ENCODE measurements at regions of chr2 and their contacts with region 1.

Region 1: GRCh38 chr2:218876562-218877219 is 4.0 kb upstream of the WNT10A start:
- DNase-seq: peak; percentile 27 to 56 (median 49)
- H3K4me3 ChIP-seq: no peak overlapping the region
- H3K4me3 Mint-ChIP-seq: peak overlapping the region in 1 of 2 donors; percentile 54
- H3K27ac ChIP-seq: no peak overlapping the region
- H3K27ac Mint-ChIP-seq: peak overlapping the region in 1 of 7 donors; percentile 3
- H3K4me1 ChIP-seq: peaks cover 21 to 29% of the 10 kb centered on the region in 2 donors
- H3K4me1 Mint-ChIP-seq: peaks cover 28% of the 10 kb centered on the region
- H3K27me3 ChIP-seq: peaks cover 66 to 95% of the 10 kb centered on the region in 2 donors
- H3K27me3 Mint-ChIP-seq: peaks cover 89 to 96% (median 89%) of the 10 kb centered on the region in 3 donors
- CTCF ChIP-seq: peak; percentile 98

Region 2: DNA sequence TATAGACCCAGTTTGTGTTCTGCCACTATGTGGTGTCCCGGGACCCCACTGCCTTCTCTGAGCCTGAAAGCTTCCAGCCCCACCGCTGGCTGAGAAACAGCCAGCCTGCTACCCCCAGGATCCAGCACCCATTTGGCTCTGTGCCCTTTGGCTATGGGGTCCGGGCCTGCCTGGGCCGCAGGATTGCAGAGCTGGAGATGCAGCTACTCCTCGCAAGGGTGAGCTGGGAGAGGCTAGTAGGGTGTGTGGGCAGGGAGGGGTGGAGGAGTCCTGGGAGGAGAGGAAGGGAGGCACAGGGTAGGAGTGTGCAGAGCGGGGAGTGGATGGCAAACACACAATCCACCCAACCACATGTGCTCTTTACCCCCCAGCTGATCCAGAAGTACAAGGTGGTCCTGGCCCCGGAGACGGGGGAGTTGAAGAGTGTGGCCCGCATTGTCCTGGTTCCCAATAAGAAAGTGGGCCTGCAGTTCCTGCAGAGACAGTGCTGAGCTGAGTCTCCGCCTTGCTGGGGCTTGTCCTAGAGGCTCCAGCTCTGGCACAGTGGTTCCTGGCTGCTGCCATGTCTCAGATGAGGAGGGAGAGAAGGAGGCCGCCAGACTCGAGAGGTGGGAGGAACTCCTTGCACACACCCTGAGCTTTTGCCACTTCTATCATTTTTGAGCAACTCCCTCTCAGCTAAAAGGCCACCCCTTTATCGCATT is 62.0 kb before region 1 on chr2:
- intact Hi-C with region 1: no loop called
- DNase-seq: no peak
- H3K4me3 ChIP-seq: no peak overlapping the region
- H3K4me3 Mint-ChIP-seq: no peak overlapping the region
- H3K27ac ChIP-seq: no peak overlapping the region
- H3K27ac Mint-ChIP-seq: peak overlapping the region in 3 of 7 donors; percentile 30 to 76 (median 41)
- H3K4me1 ChIP-seq: peaks cover 19 to 29% of the 10 kb centered on the region in 2 donors
- H3K4me1 Mint-ChIP-seq: peaks cover 41% of the 10 kb centered on the region
- H3K27me3 ChIP-seq: peaks cover 0 to 3% of the 10 kb centered on the region in 2 donors
- H3K27me3 Mint-ChIP-seq: peaks cover 15 to 31% (median 15%) of the 10 kb centered on the region in 3 donors
- CTCF ChIP-seq: no peak

Region 3: GRCh38 chr2:218898109-218898878 is 21.6 kb after region 1 on chr2:
- intact Hi-C with region 1: loop called (anchors 1 to 2 kb)
- DNase-seq: peak; percentile 49 to 68 (median 62)
- H3K4me3 ChIP-seq: no peak overlapping the region
- H3K4me3 Mint-ChIP-seq: peak overlapping the region in 1 of 2 donors; percentile 72
- H3K27ac ChIP-seq: no peak overlapping the region
- H3K27ac Mint-ChIP-seq: no peak overlapping the region
- H3K4me1 ChIP-seq: peaks cover 2 to 21% of the 10 kb centered on the region in 2 donors
- H3K4me1 Mint-ChIP-seq: peaks cover 23% of the 10 kb centered on the region
- H3K27me3 ChIP-seq: peaks cover 79 to 89% of the 10 kb centered on the region in 2 donors
- H3K27me3 Mint-ChIP-seq: peaks cover 85 to 94% (median 88%) of the 10 kb centered on the region in 3 donors
- CTCF ChIP-seq: peak; percentile 100

Measured in CD14-positive monocyte (primary cell).